ENCODE measurements at regions of chr6 and their contacts with region 1.

Region 1: DNA sequence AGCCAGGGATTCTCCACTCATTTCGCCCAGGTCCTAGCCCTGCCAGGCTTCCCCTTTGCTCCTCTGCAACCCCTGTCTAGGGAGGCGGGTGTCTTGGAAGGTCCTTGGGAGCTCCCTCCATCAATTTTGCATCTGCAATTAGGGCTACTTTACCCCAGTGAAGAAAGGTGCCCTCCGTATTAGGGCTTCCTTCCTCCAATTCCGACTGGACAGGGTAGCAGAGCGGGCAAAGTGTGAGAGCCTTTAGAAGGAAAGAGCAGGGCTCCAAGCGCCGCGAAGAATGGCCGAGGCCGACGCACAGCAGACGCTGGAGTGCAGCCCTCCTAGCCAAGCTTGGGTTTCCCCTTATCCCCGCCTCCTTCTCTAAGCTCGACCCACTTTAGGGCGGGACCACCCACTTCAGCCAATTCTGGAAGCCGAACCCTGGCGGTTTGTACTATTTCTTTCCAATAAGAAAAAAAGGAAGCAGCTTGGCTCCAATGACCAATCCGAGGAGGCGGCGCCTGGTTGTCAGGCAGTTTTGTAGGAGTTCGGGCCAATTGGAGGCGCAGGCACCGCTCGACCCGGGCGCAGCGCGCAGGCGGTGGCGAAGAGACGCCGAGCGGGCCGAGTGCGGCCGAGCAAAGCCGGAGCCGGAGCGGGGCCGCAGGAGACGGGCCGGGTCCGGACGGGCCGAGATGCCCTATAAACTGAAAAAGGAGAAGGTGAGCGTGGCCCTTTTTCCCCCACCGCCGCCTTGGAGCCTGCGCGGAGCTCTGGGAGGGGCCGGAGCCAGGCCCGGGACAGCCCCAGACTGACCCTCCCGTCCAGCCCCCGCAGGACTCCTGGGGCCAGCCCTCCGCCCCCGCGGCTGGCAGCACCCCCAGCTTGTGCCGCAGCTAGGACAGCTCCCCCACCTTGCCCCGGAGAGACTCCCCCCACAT is at the start of gene PPP2R5D:
- DNase-seq: peak; percentile 93 to 99 (median 98)
- H3K4me3 ChIP-seq: peak within 1 kb of the TSS; percentile 65 to 97 (median 90)
- H3K27ac ChIP-seq: peak within 1 kb of the TSS; percentile 47 to 93 (median 85)
- H3K27me3 ChIP-seq: no peaks in the 10 kb centered on the region
- CTCF ChIP-seq: peak in 46 of 56 donors; percentile 2 to 58 (median 34)
- total RNA-seq, gene PPP2R5D: 37.6 to 92.6 (median 66.9) TPM

Region 2: DNA sequence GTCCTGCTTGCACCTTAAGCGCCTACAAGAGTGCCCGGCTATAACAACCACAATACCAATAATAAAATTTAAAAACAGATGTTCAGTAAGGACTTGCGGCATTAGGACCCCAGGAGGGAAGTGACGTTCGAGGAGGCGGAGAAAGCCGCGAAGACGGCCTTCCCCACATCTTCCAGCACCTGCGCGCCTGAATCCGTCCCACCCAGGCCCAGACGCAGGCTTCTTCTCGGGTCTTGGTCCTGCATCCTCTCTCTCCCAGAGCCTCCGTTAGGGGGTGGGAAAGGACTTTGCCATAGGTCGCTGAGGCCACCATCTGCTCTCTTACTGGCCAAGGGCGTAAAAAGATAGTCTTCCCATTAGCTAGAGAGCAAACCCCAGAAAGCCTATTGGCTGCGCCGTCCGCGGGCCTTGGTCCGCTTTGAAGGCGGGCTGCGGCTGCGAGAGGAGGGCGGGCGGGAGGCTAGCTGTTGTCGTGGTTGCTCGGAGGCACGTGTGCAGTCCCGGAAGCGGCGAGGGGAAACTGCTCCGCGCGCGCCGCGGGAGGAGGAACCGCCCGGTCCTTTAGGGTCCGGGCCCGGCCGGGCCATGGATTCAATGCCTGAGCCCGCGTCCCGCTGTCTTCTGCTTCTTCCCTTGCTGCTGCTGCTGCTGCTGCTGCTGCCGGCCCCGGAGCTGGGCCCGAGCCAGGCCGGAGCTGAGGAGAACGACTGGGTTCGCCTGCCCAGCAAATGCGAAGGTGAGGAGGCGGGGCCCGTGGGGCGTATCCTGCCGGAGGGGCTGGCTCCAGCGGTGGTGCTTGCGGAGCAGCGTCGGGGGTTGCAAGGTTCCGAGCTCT is 55.1 kb before region 1 on chr6 and contains the start of gene CNPY3:
- intact Hi-C with region 1: loop called (anchors 2 kb)
- DNase-seq: peak; percentile 79 to 96 (median 94)
- H3K4me3 ChIP-seq: peak within 1 kb of the TSS; percentile 65 to 98 (median 85)
- H3K27ac ChIP-seq: peak within 1 kb of the TSS; percentile 61 to 98 (median 93)
- H3K27me3 ChIP-seq: no peaks in the 10 kb centered on the region
- CTCF ChIP-seq: peak in 19 of 56 donors; percentile 6 to 52 (median 21)
- total RNA-seq, gene CNPY3: 33.3 to 56.8 (median 43.9) TPM

Region 3: GRCh38 chr6:43021270-43022047 is 37.2 kb after region 1 on chr6 and contains the start of gene RRP36:
- intact Hi-C with region 1: loop called in 1 of 2 experiments (anchors 5 kb)
- DNase-seq: peak; percentile 66 to 90 (median 83)
- H3K4me3 ChIP-seq: peak within 1 kb of the TSS; percentile 58 to 99 (median 90)
- H3K27ac ChIP-seq: peak within 1 kb of the TSS in 56 of 59 donors; percentile 29 to 95 (median 80)
- H3K27me3 ChIP-seq: no peaks in the 10 kb centered on the region
- CTCF ChIP-seq: peak in 2 of 56 donors; percentile 7 to 14
- total RNA-seq, gene RRP36: 17.1 to 44.4 (median 35.3) TPM

Region 4: DNA sequence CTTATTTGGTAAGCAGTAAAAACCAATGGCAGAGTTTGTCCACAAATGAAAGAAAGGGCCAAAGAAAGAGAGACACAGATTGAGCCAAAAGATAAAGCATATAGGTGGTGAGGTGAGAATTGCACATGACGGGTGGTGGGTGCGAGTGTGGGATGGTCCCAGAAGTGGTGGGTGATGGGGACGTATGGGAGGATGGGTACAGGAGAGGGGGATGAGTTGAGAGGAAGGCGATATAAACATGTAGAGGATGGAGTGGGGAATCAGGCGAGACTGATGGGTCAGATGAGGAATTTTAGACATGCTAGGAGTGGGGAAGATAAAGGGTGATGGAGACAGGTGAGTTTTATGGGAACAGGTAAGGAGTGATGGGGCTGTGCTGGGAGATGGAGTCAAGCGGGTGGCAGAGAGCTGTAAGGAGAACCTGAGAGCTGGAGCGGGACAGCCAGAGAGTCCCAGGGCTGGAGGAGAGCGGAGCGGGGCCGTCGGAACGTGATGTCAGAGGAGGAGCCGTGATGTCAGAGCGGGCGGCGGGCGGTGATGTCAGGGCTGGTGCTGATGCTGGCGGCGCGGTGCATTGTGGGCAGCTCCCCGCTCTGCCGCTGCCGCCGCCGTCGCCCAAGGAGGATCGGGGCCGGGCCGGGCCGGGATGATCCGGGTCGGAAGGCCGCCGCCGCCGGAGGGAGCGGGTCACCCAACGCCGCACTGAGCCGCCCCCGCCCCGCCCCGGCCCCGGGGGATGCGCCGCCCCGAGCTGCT is 258.8 kb after region 1 on chr6 and contains the start of gene TTBK1:
- intact Hi-C with region 1: no loop called
- DNase-seq: peak; percentile 50 to 86 (median 76)
- H3K4me3 ChIP-seq: peak within 1 kb of the TSS; percentile 39 to 81 (median 68)
- H3K27ac ChIP-seq: peak within 1 kb of the TSS in 51 of 59 donors; percentile 41 to 90 (median 76)
- H3K27me3 ChIP-seq: peaks cover 0 to 3% (median 0%) of the 10 kb centered on the region in 45 donors
- CTCF ChIP-seq: no peak
- total RNA-seq, gene TTBK1: 37.5 to 77.7 (median 63.5) TPM